ENCODE measurements at regions of chr14 and their contacts with region 1.

Region 1: DNA sequence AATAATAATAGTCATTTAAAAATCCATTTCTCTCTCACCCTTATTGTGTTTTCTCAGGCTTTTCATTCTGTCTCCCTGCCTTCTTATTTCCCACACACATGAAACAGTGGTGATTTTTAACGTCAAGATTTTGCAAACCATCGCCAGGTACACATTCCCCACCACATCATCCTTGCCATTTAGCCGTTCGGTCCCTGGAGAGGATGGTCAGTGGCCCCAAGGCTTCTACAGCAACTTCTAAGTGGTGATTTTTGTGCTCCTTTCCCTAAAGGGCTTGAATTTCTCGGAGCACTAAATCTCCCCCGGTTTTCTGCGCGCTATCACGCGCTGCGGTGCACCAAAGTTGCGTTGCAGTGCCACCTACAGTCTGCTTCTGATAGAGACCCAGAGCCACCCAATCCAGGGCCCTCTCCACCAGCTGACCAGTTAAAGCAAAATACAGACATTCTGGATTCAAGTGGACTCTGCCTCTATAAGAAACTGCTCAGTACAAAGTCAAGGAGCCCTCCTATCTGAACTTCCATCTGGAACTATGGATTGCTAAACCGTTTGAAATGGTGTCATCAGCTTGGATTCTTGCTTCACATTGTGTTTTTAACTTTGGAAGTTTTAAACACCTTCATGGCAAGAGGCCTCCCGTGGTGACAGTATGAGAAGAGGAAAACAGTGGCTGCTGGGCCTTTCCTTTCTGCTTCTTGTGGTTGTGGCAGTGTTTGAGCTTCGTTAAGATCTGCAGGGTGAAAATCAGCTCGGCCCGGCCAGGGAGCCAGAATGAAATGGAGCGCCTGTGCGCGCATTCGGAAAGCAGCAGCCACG is 234.0 kb downstream of the SPTSSA start:
- DNase-seq: peak in 8 of 9 donors; percentile 5 to 61 (median 12)
- ATAC-seq: peak; percentile 71
- H3K4me3 ChIP-seq: no peak overlapping the region
- H3K4me3 Mint-ChIP-seq: peak overlapping the region in 3 of 10 donors; percentile 26 to 58 (median 39)
- H3K27ac ChIP-seq: no peak overlapping the region
- H3K27ac Mint-ChIP-seq: no peak overlapping the region
- H3K4me1 ChIP-seq: no peaks in the 10 kb centered on the region
- H3K4me1 Mint-ChIP-seq: peaks cover 0 to 18% (median 4%) of the 10 kb centered on the region in 7 donors
- H3K27me3 ChIP-seq: no peaks in the 10 kb centered on the region
- H3K27me3 Mint-ChIP-seq: peaks cover 0 to 23% (median 7%) of the 10 kb centered on the region in 5 donors

Region 2: GRCh38 chr14:32576088-32576795 is 1651.8 kb before region 1 on chr14:
- CTCF ChIA-PET with region 1: interaction called, 3 read pairs
- POLR2A ChIA-PET with region 1: no interaction called
- intact Hi-C with region 1: loop called (anchors 1 to 5 kb)
- DNase-seq: peak in 7 of 9 donors; percentile 19 to 44 (median 30)
- ATAC-seq: peak; percentile 76
- H3K4me3 ChIP-seq: no peak overlapping the region
- H3K4me3 Mint-ChIP-seq: no peak overlapping the region
- H3K27ac ChIP-seq: no peak overlapping the region
- H3K27ac Mint-ChIP-seq: no peak overlapping the region
- H3K4me1 ChIP-seq: no peaks in the 10 kb centered on the region
- H3K4me1 Mint-ChIP-seq: no peaks in the 10 kb centered on the region
- H3K27me3 ChIP-seq: no peaks in the 10 kb centered on the region
- H3K27me3 Mint-ChIP-seq: peaks cover 0 to 29% (median 6%) of the 10 kb centered on the region in 5 donors

Region 3: DNA sequence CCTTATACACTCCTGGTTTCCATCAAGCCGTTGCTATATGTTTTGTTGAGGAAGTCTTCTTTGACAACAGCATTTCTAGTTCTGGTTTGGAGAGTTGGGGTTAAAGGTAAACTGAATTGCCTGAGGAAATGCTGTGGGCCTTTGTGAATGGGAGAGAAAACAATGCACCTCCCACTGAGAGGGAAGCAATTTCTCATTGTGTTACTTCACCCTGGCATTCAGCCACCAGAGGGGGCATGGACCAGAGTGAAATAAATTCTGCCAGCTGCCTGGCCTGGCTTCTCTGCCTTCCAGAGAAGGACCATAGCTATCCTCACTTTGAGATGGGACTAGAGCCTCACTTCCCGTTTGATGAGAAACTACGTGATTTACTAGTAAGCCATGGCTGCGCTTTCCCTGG is 752.4 kb before region 1 on chr14:
- CTCF ChIA-PET with region 1: no interaction called
- POLR2A ChIA-PET with region 1: no interaction called
- intact Hi-C with region 1: loop called in 1 of 2 experiments (anchors 5 kb)
- DNase-seq: no peak
- ATAC-seq: no peak
- H3K4me3 ChIP-seq: no peak overlapping the region
- H3K4me3 Mint-ChIP-seq: no peak overlapping the region
- H3K27ac ChIP-seq: no peak overlapping the region
- H3K27ac Mint-ChIP-seq: no peak overlapping the region
- H3K4me1 ChIP-seq: no peaks in the 10 kb centered on the region
- H3K4me1 Mint-ChIP-seq: no peaks in the 10 kb centered on the region
- H3K27me3 ChIP-seq: no peaks in the 10 kb centered on the region
- H3K27me3 Mint-ChIP-seq: peaks cover 2 to 13% (median 3%) of the 10 kb centered on the region in 5 donors

Region 4: GRCh38 chr14:33839193-33840076 is 388.6 kb before region 1 on chr14:
- CTCF ChIA-PET with region 1: no interaction called
- POLR2A ChIA-PET with region 1: no interaction called
- intact Hi-C with region 1: loop called in 1 of 2 experiments (anchors 1 kb)
- DNase-seq: peak in 8 of 9 donors; percentile 2 to 56 (median 30)
- ATAC-seq: peak; percentile 79
- H3K4me3 ChIP-seq: no peak overlapping the region
- H3K4me3 Mint-ChIP-seq: no peak overlapping the region
- H3K27ac ChIP-seq: no peak overlapping the region
- H3K27ac Mint-ChIP-seq: no peak overlapping the region
- H3K4me1 ChIP-seq: no peaks in the 10 kb centered on the region
- H3K4me1 Mint-ChIP-seq: peaks cover 0 to 48% (median 0%) of the 10 kb centered on the region in 7 donors
- H3K27me3 ChIP-seq: no peaks in the 10 kb centered on the region
- H3K27me3 Mint-ChIP-seq: peaks cover 0 to 8% (median 0%) of the 10 kb centered on the region in 5 donors

Region 5: GRCh38 chr14:34098045-34098984 is 129.7 kb before region 1 on chr14:
- CTCF ChIA-PET with region 1: no interaction called
- POLR2A ChIA-PET with region 1: no interaction called
- intact Hi-C with region 1: loop called in 1 of 2 experiments (anchors 5 kb)
- DNase-seq: peak in 2 of 9 donors; percentile 2 to 29
- ATAC-seq: no peak
- H3K4me3 ChIP-seq: no peak overlapping the region
- H3K4me3 Mint-ChIP-seq: peak overlapping the region in 1 of 10 donors; percentile 39
- H3K27ac ChIP-seq: no peak overlapping the region
- H3K27ac Mint-ChIP-seq: peak overlapping the region in 1 of 9 donors; percentile 40
- H3K4me1 ChIP-seq: no peaks in the 10 kb centered on the region
- H3K4me1 Mint-ChIP-seq: peaks cover 0 to 53% (median 7%) of the 10 kb centered on the region in 7 donors
- H3K27me3 ChIP-seq: no peaks in the 10 kb centered on the region
- H3K27me3 Mint-ChIP-seq: peaks cover 0 to 4% (median 0%) of the 10 kb centered on the region in 5 donors

Region 6: GRCh38 chr14:35565871-35566464 is 1337.9 kb after region 1 on chr14:
- CTCF ChIA-PET with region 1: no interaction called
- POLR2A ChIA-PET with region 1: no interaction called
- intact Hi-C with region 1: no loop called
- DNase-seq: no peak
- ATAC-seq: no peak
- H3K4me3 ChIP-seq: no peak overlapping the region
- H3K4me3 Mint-ChIP-seq: no peak overlapping the region
- H3K27ac ChIP-seq: no peak overlapping the region
- H3K27ac Mint-ChIP-seq: no peak overlapping the region
- H3K4me1 ChIP-seq: no peaks in the 10 kb centered on the region
- H3K4me1 Mint-ChIP-seq: no peaks in the 10 kb centered on the region
- H3K27me3 ChIP-seq: no peaks in the 10 kb centered on the region
- H3K27me3 Mint-ChIP-seq: no peaks in the 10 kb centered on the region